ENCODE measurements at regions of chr1 and their contacts with region 1.

Region 1: GRCh38 chr1:28518000-28518744 is 12.3 kb downstream of the RCC1 start:
- DNase-seq: peak; percentile 84
- H3K4me3 Mint-ChIP-seq: peak overlapping the region; percentile 89
- H3K27ac Mint-ChIP-seq: peak overlapping the region; percentile 93
- H3K4me1 Mint-ChIP-seq: peaks cover 36% of the 10 kb centered on the region
- H3K27me3 Mint-ChIP-seq: no peaks in the 10 kb centered on the region

Region 2: DNA sequence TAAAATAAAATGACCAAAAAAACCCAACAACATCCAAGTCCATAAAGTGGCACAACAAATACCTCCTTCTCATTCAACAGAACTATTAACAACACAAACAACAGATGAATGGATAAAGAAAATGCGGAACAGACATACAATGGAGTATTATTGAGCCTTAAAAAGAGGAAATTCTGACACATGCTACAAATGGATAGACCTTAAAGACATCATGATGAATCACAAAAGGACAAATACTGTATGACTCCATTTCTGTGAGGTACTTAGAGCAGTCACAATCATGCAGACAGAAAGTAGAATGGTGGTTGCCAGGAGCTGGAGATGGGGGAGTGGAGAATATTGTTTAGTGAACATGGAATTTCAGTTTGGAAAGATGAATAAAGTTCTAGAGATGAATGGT is 472.4 kb before region 1 on chr1:
- intact Hi-C with region 1: no loop called
- DNase-seq: no peak
- H3K4me3 Mint-ChIP-seq: no peak overlapping the region
- H3K27ac Mint-ChIP-seq: no peak overlapping the region
- H3K4me1 Mint-ChIP-seq: peaks cover 2% of the 10 kb centered on the region
- H3K27me3 Mint-ChIP-seq: no peaks in the 10 kb centered on the region

Region 3: DNA sequence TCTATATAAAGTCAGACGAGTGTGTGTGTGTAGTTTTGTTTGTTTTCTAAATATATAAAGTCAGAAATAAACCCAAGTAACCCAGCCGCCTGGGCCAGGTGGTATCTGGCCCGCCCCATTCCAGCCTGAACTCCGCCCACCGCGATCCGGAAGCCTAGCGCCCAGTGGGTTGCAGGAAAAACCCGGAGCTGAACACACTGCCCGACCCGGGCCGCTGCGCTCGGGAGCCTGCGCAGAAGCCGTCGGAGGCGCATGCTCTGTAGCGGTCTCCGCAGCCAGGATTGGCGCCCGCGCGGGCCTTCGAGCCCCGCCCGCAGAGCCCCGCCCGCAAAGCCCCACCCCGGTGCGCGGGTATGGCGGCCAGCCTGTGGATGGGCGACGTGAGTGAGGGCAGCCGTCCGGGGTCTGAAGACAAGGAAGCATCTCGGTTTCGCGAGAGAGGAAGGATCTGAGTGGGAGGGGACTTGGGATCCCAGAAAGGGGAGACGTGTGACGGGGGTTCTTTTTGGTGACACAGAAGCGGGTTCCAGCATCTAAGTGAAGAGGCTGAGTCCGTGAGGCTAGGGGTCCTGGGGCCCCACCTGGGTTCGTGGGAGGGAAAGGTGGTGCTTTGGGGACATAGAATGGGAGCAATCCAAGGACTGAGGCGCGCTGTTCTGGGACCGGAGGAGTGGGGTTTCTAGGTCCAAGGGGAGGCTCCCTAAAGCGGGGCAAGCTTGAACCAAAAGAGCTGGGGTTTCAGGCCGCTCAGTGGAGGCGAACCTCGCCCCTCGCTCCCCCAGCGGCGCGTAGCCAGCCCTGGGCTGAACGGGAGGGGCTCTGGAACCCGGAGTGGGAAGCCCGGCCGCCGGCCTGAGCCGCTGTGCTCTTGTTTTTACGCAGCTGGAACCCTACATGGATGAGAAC is 34.8 kb after region 1 on chr1 and contains the start of gene TRNAU1AP:
- intact Hi-C with region 1: loop called (anchors 1 kb)
- DNase-seq: peak; percentile 97
- H3K4me3 Mint-ChIP-seq: peak within 1 kb of the TSS; percentile 91
- H3K27ac Mint-ChIP-seq: peak within 1 kb of the TSS; percentile 93
- H3K4me1 Mint-ChIP-seq: peaks cover 6% of the 10 kb centered on the region
- H3K27me3 Mint-ChIP-seq: no peaks in the 10 kb centered on the region
- total RNA-seq, gene TRNAU1AP: 49.4 and 55.4 TPM in 2 replicates

Region 4: GRCh38 chr1:28602536-28603439 is 84.6 kb after region 1 on chr1:
- intact Hi-C with region 1: loop called (anchors 5 kb)
- DNase-seq: no peak
- H3K4me3 Mint-ChIP-seq: no peak overlapping the region
- H3K27ac Mint-ChIP-seq: no peak overlapping the region
- H3K4me1 Mint-ChIP-seq: peaks cover 16% of the 10 kb centered on the region
- H3K27me3 Mint-ChIP-seq: no peaks in the 10 kb centered on the region

Region 5: GRCh38 chr1:28648474-28649198 is 130.5 kb after region 1 on chr1 and contains the start of gene RNU11:
- intact Hi-C with region 1: loop called (anchors 2 kb)
- DNase-seq: peak; percentile 84
- H3K4me3 Mint-ChIP-seq: peak within 1 kb of the TSS; percentile 81
- H3K27ac Mint-ChIP-seq: peak within 1 kb of the TSS; percentile 99
- H3K4me1 Mint-ChIP-seq: peaks cover 25% of the 10 kb centered on the region
- H3K27me3 Mint-ChIP-seq: no peaks in the 10 kb centered on the region
- total RNA-seq, gene RNU11: not detected in 2 replicates

Region 6: DNA sequence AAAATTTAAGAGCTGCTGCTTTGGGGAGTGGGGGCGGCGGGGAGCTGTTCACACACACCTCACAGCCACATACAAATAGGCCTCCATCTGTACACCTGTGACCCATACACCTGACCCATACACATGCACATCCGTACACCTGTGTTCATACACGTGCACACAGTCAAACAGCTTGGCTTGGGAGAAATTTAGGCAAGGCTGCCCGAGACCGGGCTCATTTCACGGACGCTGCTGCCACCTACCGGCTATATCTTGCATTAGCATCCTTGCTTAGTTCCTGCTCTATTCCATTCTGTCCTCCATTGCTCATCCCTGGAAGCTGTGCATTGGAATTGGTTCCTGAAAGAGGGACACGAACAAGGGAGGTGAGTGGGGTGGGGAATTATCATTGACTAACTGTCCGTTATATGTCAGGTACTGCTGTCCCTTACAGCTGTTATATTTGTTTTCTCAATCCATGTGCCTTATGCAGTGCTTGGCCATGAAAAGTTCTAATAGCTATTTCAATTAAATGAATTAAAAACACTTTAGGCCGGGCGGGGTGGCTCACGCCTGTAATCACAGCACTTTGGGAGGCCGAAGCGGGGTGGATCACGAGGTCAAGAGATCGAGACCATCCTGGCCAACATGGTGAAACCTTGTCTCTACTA is 359.1 kb after region 1 on chr1:
- intact Hi-C with region 1: loop called (anchors 2 kb)
- DNase-seq: peak; percentile 58
- H3K4me3 Mint-ChIP-seq: no peak overlapping the region
- H3K27ac Mint-ChIP-seq: no peak overlapping the region
- H3K4me1 Mint-ChIP-seq: peaks cover 3% of the 10 kb centered on the region
- H3K27me3 Mint-ChIP-seq: peaks cover 10% of the 10 kb centered on the region